ENCODE measurements at regions of chr1 and their contacts with region 1.

Region 1: GRCh38 chr1:29181413-29182225 is at the start of gene SRSF4:
- DNase-seq: peak; percentile 100
- ATAC-seq: peak; percentile 90
- H3K4me3 Mint-ChIP-seq: peak within 1 kb of the TSS; percentile 95
- H3K27ac Mint-ChIP-seq: peak within 1 kb of the TSS; percentile 96
- H3K4me1 Mint-ChIP-seq: peaks cover 46% of the 10 kb centered on the region
- H3K27me3 Mint-ChIP-seq: no peaks in the 10 kb centered on the region
- total RNA-seq, gene SRSF4: 119 to 129 TPM

Region 2: DNA sequence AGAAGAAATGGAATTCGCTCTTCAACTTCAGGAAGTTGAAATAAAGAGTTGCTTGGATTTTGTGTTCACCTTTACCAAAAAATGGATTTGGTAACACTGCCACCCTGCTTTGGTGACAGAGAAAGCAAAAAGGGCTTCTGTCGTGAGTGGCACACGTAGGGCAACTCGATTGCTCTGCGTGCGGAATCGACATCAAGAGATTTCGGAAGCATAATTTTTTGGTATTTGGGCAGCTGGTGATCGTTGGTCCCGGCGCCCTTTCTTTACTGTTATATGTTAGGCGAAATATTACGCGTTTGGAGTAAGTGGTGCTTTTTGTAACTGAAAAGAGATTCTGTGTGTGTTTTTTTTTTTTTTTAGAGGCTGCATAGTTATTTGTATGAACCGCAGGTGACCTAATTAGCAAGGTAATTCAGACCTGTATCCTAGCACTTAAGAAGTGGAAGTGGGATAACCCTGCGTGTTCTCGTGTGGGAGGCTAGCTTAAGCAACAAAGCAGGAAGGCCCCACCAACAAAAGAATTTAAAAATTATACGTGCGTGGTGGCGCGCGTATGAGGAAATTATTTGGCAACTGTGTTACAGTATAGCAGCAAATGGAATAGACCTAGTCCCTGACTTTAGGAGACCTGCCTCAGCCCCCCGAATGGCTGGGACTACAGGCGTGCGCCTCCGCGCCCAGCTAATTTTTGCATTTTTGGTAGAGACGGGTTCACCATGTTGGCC is 533.0 kb before region 1 on chr1 and contains the start of gene RNU11:
- POLR2A ChIA-PET with region 1: interaction called, 23 read pairs
- DNase-seq: peak; percentile 75
- ATAC-seq: peak; percentile 82
- H3K4me3 Mint-ChIP-seq: peak within 1 kb of the TSS; percentile 87
- H3K27ac Mint-ChIP-seq: peak within 1 kb of the TSS; percentile 98
- H3K4me1 Mint-ChIP-seq: peaks cover 21% of the 10 kb centered on the region
- H3K27me3 Mint-ChIP-seq: no peaks in the 10 kb centered on the region
- total RNA-seq, gene RNU11: not detected

Region 3: GRCh38 chr1:28736450-28737306 is 444.9 kb before region 1 on chr1 and contains the start of gene YTHDF2:
- POLR2A ChIA-PET with region 1: interaction called, 27 read pairs
- DNase-seq: peak; percentile 98
- ATAC-seq: peak; percentile 98
- H3K4me3 Mint-ChIP-seq: peak within 1 kb of the TSS; percentile 96
- H3K27ac Mint-ChIP-seq: peak within 1 kb of the TSS; percentile 94
- H3K4me1 Mint-ChIP-seq: peaks cover 22% of the 10 kb centered on the region
- H3K27me3 Mint-ChIP-seq: no peaks in the 10 kb centered on the region
- total RNA-seq, gene YTHDF2: 62.5 to 70.2 TPM

Region 4: DNA sequence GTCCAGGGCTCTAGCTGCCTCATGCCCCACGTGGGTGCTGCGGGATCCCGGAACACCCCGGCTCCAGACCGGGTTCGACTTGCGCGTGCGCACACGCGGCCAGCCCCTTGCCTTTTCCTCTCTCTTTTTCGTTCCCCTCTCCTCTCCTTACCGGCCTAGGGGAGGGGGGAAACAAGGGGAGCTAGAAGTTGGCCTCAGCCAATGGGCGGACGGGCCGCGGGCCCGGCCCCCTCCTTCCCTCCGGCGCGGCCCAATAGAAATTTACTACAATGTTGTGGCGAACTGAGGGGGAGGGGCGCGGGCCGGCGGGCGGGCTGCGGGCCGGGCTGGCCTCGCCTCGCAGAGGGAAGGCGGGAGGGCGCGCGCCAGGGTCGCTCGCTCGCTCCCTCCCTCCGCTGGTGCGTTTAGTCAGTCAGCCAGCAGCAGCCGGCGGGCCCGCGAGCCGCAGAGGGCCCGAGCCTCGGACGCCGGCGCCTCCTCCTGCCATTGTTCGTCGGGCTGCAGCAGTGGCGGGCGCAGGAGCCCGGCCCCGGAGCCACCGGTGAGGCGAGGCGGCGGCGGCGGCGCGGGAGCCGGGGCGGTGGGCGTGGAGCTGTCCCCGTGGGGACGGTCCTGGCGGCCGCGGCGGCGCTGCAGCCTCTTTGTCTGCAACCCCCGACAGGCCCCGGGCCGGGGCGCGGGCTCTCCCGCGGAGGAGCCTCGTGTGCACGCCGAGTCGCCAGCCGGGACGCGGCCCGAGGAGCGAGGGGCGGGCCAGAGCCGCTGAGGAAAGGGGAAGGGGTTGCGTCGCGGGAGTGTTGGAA is 267.2 kb before region 1 on chr1 and contains the start of gene EPB41:
- POLR2A ChIA-PET with region 1: interaction called, 14 read pairs
- DNase-seq: peak; percentile 92
- ATAC-seq: peak; percentile 90
- H3K4me3 Mint-ChIP-seq: peak within 1 kb of the TSS; percentile 97
- H3K27ac Mint-ChIP-seq: peak within 1 kb of the TSS; percentile 96
- H3K4me1 Mint-ChIP-seq: peaks cover 39% of the 10 kb centered on the region
- H3K27me3 Mint-ChIP-seq: no peaks in the 10 kb centered on the region
- total RNA-seq, gene EPB41: 162 to 170 TPM

Region 5: DNA sequence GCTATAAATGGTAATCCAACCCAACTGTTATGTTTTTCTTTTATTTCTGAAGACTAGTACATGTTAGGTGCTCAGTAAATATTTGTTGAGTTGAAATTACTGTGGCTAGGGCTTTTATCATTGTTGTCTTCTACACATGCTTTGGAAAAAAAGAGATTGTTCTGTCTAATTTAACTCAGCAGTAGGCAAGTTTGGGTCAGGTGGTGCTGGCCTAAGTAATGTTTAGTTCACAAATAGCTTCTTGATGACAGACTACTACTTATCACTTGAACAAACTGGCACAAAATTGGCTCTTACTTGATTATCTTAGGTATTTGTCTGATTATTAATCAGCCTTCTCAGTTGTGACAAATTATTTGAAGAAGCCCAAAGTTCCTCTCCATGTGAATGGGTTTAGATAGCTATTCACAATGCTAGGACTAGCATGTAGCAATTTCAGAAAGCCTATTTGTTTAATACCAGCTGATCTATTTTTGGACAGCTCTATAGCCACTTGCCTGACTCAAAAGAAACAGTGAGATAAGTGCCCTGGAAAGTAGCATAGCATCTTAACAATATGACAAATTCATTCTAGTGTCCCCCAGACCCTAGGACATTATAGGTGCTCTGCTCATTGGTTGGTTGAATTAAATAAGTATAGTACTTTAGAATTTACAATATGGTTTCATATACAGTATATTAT is 90.5 kb before region 1 on chr1:
- POLR2A ChIA-PET with region 1: no interaction called
- DNase-seq: no peak
- ATAC-seq: no peak
- H3K4me3 Mint-ChIP-seq: no peak overlapping the region
- H3K27ac Mint-ChIP-seq: no peak overlapping the region
- H3K4me1 Mint-ChIP-seq: peaks cover 2% of the 10 kb centered on the region
- H3K27me3 Mint-ChIP-seq: no peaks in the 10 kb centered on the region

Region 6: GRCh38 chr1:29197585-29197924 is 15.9 kb after region 1 on chr1:
- POLR2A ChIA-PET with region 1: interaction called, 18 read pairs
- DNase-seq: no peak
- ATAC-seq: peak; percentile 92
- H3K4me3 Mint-ChIP-seq: no peak overlapping the region
- H3K27ac Mint-ChIP-seq: no peak overlapping the region
- H3K4me1 Mint-ChIP-seq: peaks cover 9% of the 10 kb centered on the region
- H3K27me3 Mint-ChIP-seq: no peaks in the 10 kb centered on the region